Activated naive CD4-positive, alpha-beta T cell treated with anti-CD3 and anti-CD28 coated beads for 36 hours (primary cell): ENCODE measurements at regions of chr20 and their contacts with region 1.

Region 1: GRCh38 chr20:45095753-45096371 is 5.1 kb downstream of the KCNS1 start:
- DNase-seq: peak; percentile 83
- H3K4me3 Mint-ChIP-seq: no peak overlapping the region
- H3K27ac Mint-ChIP-seq: no peak overlapping the region
- H3K4me1 Mint-ChIP-seq: peaks cover 10% of the 10 kb centered on the region
- H3K27me3 Mint-ChIP-seq: peaks cover 29% of the 10 kb centered on the region

Region 2: GRCh38 chr20:44909872-44910689 is 185.8 kb before region 1 on chr20 and contains the start of gene PABPC1L:
- CTCF ChIA-PET with region 1: interaction called, 12 read pairs
- intact Hi-C with region 1: loop called (anchors 2 kb)
- DNase-seq: peak; percentile 81
- H3K4me3 Mint-ChIP-seq: peak within 1 kb of the TSS; percentile 88
- H3K27ac Mint-ChIP-seq: peak within 1 kb of the TSS; percentile 66
- H3K4me1 Mint-ChIP-seq: peaks cover 35% of the 10 kb centered on the region
- H3K27me3 Mint-ChIP-seq: no peaks in the 10 kb centered on the region
- total RNA-seq, gene PABPC1L: 71.0 to 72.8 TPM

Region 3: GRCh38 chr20:45011108-45011526 is 84.7 kb before region 1 on chr20:
- CTCF ChIA-PET with region 1: interaction called, 23 read pairs
- intact Hi-C with region 1: loop called (anchors 1 kb)
- DNase-seq: peak; percentile 75
- H3K4me3 Mint-ChIP-seq: no peak overlapping the region
- H3K27ac Mint-ChIP-seq: no peak overlapping the region
- H3K4me1 Mint-ChIP-seq: peaks cover 47% of the 10 kb centered on the region
- H3K27me3 Mint-ChIP-seq: no peaks in the 10 kb centered on the region

Region 4: DNA sequence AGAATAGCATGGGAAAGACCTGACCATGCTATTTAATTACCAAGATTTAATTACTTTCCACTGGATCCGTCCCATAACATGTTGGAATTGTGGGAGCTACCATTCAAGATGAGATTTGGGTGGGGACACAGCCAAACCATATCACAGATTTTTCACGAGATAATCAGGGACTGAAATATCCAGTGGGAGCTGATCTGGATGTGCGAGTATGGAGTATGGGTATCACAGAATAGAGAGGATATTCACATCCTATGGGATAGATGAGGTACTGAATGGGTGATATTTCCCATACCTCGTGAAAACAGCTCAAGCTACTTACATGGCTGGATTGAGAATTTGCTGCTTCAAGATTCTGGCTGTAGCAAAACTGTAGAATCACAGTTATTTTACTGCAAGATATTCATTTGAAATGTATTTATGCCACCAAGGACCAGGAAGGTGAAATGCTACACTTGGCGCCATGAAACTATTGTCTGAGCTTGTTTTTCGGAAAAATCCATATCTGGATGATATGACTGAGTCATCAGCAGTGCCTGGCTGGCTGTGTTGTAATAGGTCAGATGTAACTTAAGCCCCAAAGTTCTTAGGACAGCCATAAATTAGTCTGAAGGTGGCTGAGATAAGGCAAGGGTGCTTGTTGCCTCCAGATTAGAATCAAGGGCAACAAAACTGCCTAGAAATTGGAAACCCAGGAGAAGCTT is 24.8 kb before region 1 on chr20:
- CTCF ChIA-PET with region 1: interaction called, 21 read pairs
- intact Hi-C with region 1: no loop called
- DNase-seq: no peak
- H3K4me3 Mint-ChIP-seq: no peak overlapping the region
- H3K27ac Mint-ChIP-seq: peak overlapping the region; percentile 46
- H3K4me1 Mint-ChIP-seq: peaks cover 45% of the 10 kb centered on the region
- H3K27me3 Mint-ChIP-seq: no peaks in the 10 kb centered on the region

Region 5: DNA sequence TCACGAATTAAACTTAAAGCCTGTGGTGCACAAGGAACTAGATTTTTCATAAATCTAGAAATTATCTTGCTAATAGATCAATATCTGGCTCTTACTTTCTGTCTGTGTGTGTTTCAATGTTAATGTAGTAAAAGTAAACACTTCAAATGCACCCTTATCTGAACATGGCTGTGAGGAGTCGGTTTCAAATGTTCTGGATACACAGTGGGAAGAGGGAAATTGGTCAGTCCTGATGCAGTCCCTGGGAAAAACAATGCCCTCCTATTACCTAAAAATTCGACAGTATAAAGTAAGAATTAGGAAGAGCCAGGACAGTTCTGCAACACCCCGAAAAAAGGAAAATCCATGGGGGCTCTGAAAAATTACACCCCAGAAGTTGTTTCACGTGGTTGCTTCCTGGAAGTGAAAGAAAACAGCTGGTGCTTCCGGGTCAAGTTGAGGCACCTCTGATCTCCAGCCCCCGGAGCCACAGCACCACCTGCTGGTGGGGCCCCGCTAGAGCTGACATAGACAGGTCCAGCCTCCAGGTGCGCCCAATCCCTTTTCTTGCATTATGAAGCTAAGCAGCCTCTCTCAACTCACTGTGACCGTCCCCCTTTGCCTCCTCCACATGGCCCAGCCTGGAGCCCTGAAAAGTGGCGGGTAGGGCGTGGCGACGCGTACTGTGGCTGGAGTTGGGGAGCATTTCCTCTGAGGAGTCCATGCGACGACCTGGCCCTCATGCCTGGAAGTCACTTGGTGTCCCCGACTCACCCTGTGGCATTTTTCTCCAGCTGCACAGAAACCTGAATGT is 133.6 kb after region 1 on chr20:
- CTCF ChIA-PET with region 1: interaction called, 3 read pairs
- intact Hi-C with region 1: loop called (anchors 2 kb)
- DNase-seq: peak; percentile 69
- H3K4me3 Mint-ChIP-seq: no peak overlapping the region
- H3K27ac Mint-ChIP-seq: no peak overlapping the region
- H3K4me1 Mint-ChIP-seq: no peaks in the 10 kb centered on the region
- H3K27me3 Mint-ChIP-seq: peaks cover 25% of the 10 kb centered on the region

Region 6: DNA sequence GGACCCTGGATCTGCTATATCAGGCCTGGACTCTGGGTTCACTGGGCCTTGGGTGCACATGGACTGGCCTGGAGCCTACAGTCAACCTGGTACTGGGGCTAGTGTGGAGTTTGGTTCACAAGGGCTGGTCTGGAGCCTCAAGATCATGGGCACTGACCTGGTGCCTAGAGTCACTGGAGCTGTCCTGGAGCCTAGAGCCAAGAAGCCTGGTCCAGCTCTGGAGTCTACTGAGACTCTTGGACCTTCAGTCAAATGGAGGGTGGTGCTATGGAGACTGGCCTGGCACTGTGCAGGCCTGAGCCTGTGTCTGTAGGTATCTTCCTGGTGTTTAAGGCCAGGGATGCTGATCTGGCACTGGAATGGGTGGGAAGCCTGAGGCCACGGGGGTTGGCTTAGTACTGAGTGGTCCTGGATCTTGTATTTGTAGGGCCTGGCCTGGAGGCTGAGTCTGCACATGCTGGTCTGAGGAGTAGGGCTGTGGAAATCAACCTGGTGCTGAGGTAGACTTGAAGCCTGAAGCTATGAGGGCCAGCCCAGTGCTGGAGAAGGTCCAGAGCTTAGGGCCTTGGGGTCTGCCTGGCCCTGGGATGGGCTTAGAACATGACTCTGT is 551.7 kb after region 1 on chr20:
- CTCF ChIA-PET with region 1: no interaction called
- intact Hi-C with region 1: no loop called
- DNase-seq: no peak
- H3K4me3 Mint-ChIP-seq: no peak overlapping the region
- H3K27ac Mint-ChIP-seq: no peak overlapping the region
- H3K4me1 Mint-ChIP-seq: no peaks in the 10 kb centered on the region
- H3K27me3 Mint-ChIP-seq: peaks cover 10% of the 10 kb centered on the region